ENCODE measurements at regions of chr11 and their contacts with region 1.

Region 1: DNA sequence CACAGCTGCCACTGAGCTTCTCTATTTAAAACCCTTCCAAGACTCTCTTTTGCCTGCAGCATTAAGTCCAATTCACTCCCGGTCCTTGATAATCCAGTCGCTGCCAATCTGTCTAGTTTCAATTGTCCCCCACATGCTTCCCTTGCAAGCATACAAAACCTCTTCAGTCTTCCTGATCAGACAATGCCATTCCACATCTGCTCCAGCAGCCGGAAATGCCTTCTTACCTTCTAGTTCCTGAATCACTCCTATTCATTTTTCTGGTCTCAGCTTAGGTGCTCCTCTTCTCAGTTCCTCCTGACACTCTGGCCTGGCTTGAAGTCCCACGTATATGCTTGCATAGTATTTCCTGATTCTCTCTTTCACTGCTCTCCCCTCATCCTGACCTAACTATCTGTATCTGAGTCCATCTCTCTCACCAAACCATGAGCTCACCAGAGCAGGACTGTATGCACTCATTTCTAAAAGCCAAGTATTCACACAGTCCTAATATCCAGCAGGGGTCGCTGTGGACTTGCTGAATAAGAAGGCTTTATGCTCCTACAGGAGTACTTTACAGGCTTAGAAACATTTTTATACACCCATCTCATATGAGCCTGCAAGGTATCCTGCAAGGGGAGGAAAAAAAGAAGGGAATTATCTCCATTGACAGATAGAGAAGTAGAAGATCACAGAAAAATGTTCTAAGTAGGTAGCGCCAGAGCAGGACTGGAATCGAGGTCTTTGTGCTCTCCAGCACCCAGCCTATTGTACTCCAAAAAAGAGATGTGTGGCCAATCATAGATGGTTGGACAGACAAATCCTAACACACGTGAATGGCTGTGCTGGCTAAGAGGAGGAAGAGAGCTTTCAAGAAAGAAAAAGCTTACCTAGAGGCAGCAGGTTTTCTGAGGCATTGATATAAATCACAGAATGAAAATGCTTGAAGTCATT is 19.2 kb downstream of the XRRA1 start:
- DNase-seq: peak; percentile 87
- ATAC-seq: peak; percentile 78
- H3K4me3 ChIP-seq: no peak overlapping the region
- H3K4me3 Mint-ChIP-seq: no peak overlapping the region
- H3K27ac ChIP-seq: no peak overlapping the region
- H3K27ac Mint-ChIP-seq: no peak overlapping the region
- H3K4me1 ChIP-seq: no peaks in the 10 kb centered on the region
- H3K4me1 Mint-ChIP-seq: no peaks in the 10 kb centered on the region
- H3K27me3 ChIP-seq: no peaks in the 10 kb centered on the region
- H3K27me3 Mint-ChIP-seq: no peaks in the 10 kb centered on the region
- CTCF ChIP-seq: peak; percentile 93

Region 2: GRCh38 chr11:74909385-74909784 is 20.3 kb before region 1 on chr11:
- CTCF ChIA-PET with region 1: interaction called, 14 read pairs
- POLR2A ChIA-PET with region 1: no interaction called
- intact Hi-C with region 1: no loop called
- DNase-seq: no peak
- ATAC-seq: no peak
- H3K4me3 ChIP-seq: no peak overlapping the region
- H3K4me3 Mint-ChIP-seq: peak overlapping the region; percentile 40
- H3K27ac ChIP-seq: peak overlapping the region; percentile 21 to 70
- H3K27ac Mint-ChIP-seq: peak overlapping the region; percentile 60
- H3K4me1 ChIP-seq: peaks cover 14 to 16% of the 10 kb centered on the region in 2 donors
- H3K4me1 Mint-ChIP-seq: peaks cover 28% of the 10 kb centered on the region
- H3K27me3 ChIP-seq: no peaks in the 10 kb centered on the region
- H3K27me3 Mint-ChIP-seq: no peaks in the 10 kb centered on the region
- CTCF ChIP-seq: no peak

Region 3: GRCh38 chr11:75031771-75032549 is 102.3 kb after region 1 on chr11:
- CTCF ChIA-PET with region 1: interaction called, 235 read pairs
- POLR2A ChIA-PET with region 1: no interaction called
- intact Hi-C with region 1: loop called (anchors 1 kb)
- DNase-seq: peak; percentile 64
- ATAC-seq: no peak
- H3K4me3 ChIP-seq: no peak overlapping the region
- H3K4me3 Mint-ChIP-seq: no peak overlapping the region
- H3K27ac ChIP-seq: no peak overlapping the region
- H3K27ac Mint-ChIP-seq: no peak overlapping the region
- H3K4me1 ChIP-seq: peaks cover 3 to 9% of the 10 kb centered on the region in 2 donors
- H3K4me1 Mint-ChIP-seq: peaks cover 5% of the 10 kb centered on the region
- H3K27me3 ChIP-seq: no peaks in the 10 kb centered on the region
- H3K27me3 Mint-ChIP-seq: no peaks in the 10 kb centered on the region
- CTCF ChIP-seq: peak; percentile 82

Region 4: GRCh38 chr11:75204685-75205563 is 275.2 kb after region 1 on chr11:
- CTCF ChIA-PET with region 1: interaction called, 14 read pairs
- POLR2A ChIA-PET with region 1: no interaction called
- intact Hi-C with region 1: no loop called
- DNase-seq: peak; percentile 65
- ATAC-seq: peak; percentile 62
- H3K4me3 ChIP-seq: no peak overlapping the region
- H3K4me3 Mint-ChIP-seq: no peak overlapping the region
- H3K27ac ChIP-seq: no peak overlapping the region
- H3K27ac Mint-ChIP-seq: no peak overlapping the region
- H3K4me1 ChIP-seq: no peaks in the 10 kb centered on the region
- H3K4me1 Mint-ChIP-seq: no peaks in the 10 kb centered on the region
- H3K27me3 ChIP-seq: peaks cover 0 to 8% (median 3%) of the 10 kb centered on the region in 4 experiments
- H3K27me3 Mint-ChIP-seq: peaks cover 28% of the 10 kb centered on the region
- CTCF ChIP-seq: peak; percentile 71

Region 5: DNA sequence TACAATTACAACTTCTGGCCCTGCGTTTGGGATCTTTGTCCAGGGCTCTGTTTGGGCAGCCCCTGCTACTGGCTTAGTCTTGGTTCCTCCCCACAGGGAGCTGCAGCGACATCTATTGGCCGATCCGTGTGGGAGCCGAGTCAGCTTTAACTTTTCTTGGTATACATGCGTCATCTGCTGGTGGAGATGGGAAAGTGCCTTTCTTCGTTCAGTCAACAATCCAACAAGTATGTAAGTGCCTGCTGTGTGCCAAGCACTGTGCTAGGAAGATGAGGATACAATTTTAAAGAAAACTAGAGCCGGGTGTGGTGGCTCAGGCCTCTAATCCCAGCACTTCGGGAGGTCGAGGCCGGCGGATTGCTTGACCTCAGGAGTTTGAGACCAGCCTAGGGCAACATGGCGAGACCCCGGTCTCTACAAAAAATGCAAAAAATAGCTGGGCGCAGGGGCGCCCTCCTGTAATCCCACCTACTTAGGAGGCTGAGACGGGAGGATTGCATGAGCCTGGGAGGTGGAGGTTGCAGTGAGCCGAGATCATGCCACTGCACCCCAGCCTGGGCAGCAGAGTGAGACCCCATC is 319.1 kb after region 1 on chr11:
- CTCF ChIA-PET with region 1: interaction called, 30 read pairs
- POLR2A ChIA-PET with region 1: no interaction called
- intact Hi-C with region 1: loop called (anchors 1 kb)
- DNase-seq: peak; percentile 89
- ATAC-seq: peak; percentile 96
- H3K4me3 ChIP-seq: no peak overlapping the region
- H3K4me3 Mint-ChIP-seq: no peak overlapping the region
- H3K27ac ChIP-seq: no peak overlapping the region
- H3K27ac Mint-ChIP-seq: no peak overlapping the region
- H3K4me1 ChIP-seq: no peaks in the 10 kb centered on the region
- H3K4me1 Mint-ChIP-seq: peaks cover 1% of the 10 kb centered on the region
- H3K27me3 ChIP-seq: peaks cover 0 to 16% (median 4%) of the 10 kb centered on the region in 4 experiments
- H3K27me3 Mint-ChIP-seq: peaks cover 32% of the 10 kb centered on the region
- CTCF ChIP-seq: peak; percentile 100